ENCODE measurements at regions of chr2 and their contacts with region 1.

Region 1: GRCh38 chr2:60908031-60908775 is 26.8 kb downstream of the REL start:
- DNase-seq: no peak
- ATAC-seq: no peak
- H3K4me3 Mint-ChIP-seq: no peak overlapping the region
- H3K27ac Mint-ChIP-seq: no peak overlapping the region
- H3K4me1 Mint-ChIP-seq: peaks cover 16% of the 10 kb centered on the region
- H3K27me3 Mint-ChIP-seq: no peaks in the 10 kb centered on the region
- CTCF ChIP-seq: no peak

Region 2: GRCh38 chr2:60852282-60852860 is 55.8 kb before region 1 on chr2:
- CTCF ChIA-PET with region 1: no interaction called
- POLR2A ChIA-PET with region 1: no interaction called
- intact Hi-C with region 1: no loop called
- DNase-seq: no peak
- ATAC-seq: no peak
- H3K4me3 Mint-ChIP-seq: no peak overlapping the region
- H3K27ac Mint-ChIP-seq: no peak overlapping the region
- H3K4me1 Mint-ChIP-seq: peaks cover 16% of the 10 kb centered on the region
- H3K27me3 Mint-ChIP-seq: no peaks in the 10 kb centered on the region
- CTCF ChIP-seq: no peak

Region 3: DNA sequence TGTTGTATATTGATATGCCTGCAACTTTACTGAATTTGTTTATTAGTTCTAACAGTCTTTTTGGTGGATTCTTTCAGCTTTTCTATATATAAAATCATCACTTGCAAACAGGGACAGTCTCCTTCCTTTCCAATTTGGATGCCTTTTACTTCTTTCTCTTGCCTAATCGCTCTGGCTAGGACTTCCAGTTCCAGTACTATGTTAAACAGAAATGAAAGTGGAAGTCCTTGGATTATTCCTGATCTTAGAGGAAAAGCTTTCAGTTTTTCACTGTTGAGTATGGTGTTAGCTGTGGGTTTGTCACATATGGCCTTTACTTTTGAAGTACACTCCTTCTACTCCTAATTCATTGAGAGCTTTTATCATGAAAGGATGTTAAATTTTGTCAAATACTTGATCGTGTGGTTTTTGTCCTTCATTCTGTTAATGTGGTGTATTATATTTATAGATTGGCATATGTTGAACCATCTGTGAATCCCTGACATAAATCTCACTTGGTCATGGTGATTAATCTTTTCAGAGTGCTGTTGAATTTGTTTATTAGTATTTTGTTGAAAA is 26.0 kb after region 1 on chr2:
- CTCF ChIA-PET with region 1: no interaction called
- POLR2A ChIA-PET with region 1: interaction called, 11 read pairs
- intact Hi-C with region 1: no loop called
- DNase-seq: no peak
- ATAC-seq: no peak
- H3K4me3 Mint-ChIP-seq: no peak overlapping the region
- H3K27ac Mint-ChIP-seq: peak overlapping the region; percentile 6
- H3K4me1 Mint-ChIP-seq: peaks cover 50% of the 10 kb centered on the region
- H3K27me3 Mint-ChIP-seq: no peaks in the 10 kb centered on the region
- CTCF ChIP-seq: no peak

Region 4: DNA sequence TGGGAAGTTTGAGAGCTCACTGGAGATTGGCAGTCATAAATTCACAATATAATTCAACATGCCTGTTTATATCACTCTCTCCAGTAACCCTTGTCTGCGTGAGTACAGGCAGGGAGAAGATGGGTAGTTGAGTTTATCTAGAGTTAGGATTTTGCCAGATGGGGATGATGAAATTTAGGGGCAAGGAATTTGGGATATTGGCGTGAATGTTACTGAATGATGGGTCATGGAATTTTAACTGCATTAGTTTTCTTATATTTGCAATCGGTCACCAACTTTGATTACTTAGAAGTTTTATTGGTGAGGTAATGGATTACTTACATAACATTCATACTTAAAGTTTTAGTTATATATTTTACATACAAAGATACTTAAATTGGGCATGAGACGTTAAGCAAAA is 192.6 kb after region 1 on chr2:
- CTCF ChIA-PET with region 1: no interaction called
- POLR2A ChIA-PET with region 1: no interaction called
- intact Hi-C with region 1: no loop called
- DNase-seq: no peak
- ATAC-seq: no peak
- H3K4me3 Mint-ChIP-seq: no peak overlapping the region
- H3K27ac Mint-ChIP-seq: no peak overlapping the region
- H3K4me1 Mint-ChIP-seq: no peaks in the 10 kb centered on the region
- H3K27me3 Mint-ChIP-seq: no peaks in the 10 kb centered on the region
- CTCF ChIP-seq: no peak

Measured in activated B cell treated with CpG ODN at 0.5 μM for 24 hours (primary cell).